ENCODE measurements at regions of chr1 and their contacts with region 1.

Region 1: GRCh38 chr1:198681831-198682759 is 43.3 kb downstream of the PTPRC start:
- DNase-seq: peak; percentile 28 to 96 (median 92)
- ATAC-seq: peak; percentile 89
- H3K4me3 ChIP-seq: peak overlapping the region; percentile 51
- H3K4me3 Mint-ChIP-seq: peak overlapping the region; percentile 74 to 87 (median 77)
- H3K27ac ChIP-seq: peak overlapping the region; percentile 92
- H3K27ac Mint-ChIP-seq: peak overlapping the region; percentile 90 to 99 (median 98)
- H3K4me1 ChIP-seq: peaks cover 88 to 90% of the 10 kb centered on the region in 2 donors
- H3K4me1 Mint-ChIP-seq: peaks cover 53 to 94% (median 81%) of the 10 kb centered on the region in 7 donors
- H3K27me3 ChIP-seq: no peaks in the 10 kb centered on the region
- H3K27me3 Mint-ChIP-seq: peaks cover 0 to 2% (median 0%) of the 10 kb centered on the region in 5 donors

Region 2: GRCh38 chr1:197775282-197776262 is 906.5 kb before region 1 on chr1 and contains the start of gene DENND1B:
- CTCF ChIA-PET with region 1: no interaction called
- POLR2A ChIA-PET with region 1: interaction called, 3 read pairs
- intact Hi-C with region 1: loop called (anchors 5 to 10 kb)
- DNase-seq: peak; percentile 64 to 83 (median 81)
- ATAC-seq: peak; percentile 80
- H3K4me3 ChIP-seq: peak within 1 kb of the TSS; percentile 68
- H3K4me3 Mint-ChIP-seq: peak within 1 kb of the TSS; percentile 87 to 98 (median 92)
- H3K27ac ChIP-seq: peak within 1 kb of the TSS; percentile 74
- H3K27ac Mint-ChIP-seq: peak within 1 kb of the TSS; percentile 90 to 98 (median 97)
- H3K4me1 ChIP-seq: peaks cover 19 to 34% of the 10 kb centered on the region in 2 donors
- H3K4me1 Mint-ChIP-seq: peaks cover 32 to 72% (median 62%) of the 10 kb centered on the region in 7 donors
- H3K27me3 ChIP-seq: no peaks in the 10 kb centered on the region
- H3K27me3 Mint-ChIP-seq: no peaks in the 10 kb centered on the region
- total RNA-seq, gene DENND1B: 14.2 to 28.7 (median 23.2) TPM

Region 3: GRCh38 chr1:198275597-198275996 is 406.5 kb before region 1 on chr1:
- CTCF ChIA-PET with region 1: no interaction called
- POLR2A ChIA-PET with region 1: interaction called, 4 read pairs
- intact Hi-C with region 1: loop called in 1 of 2 experiments (anchors 5 kb)
- DNase-seq: peak in 1 of 9 donors; percentile 14
- ATAC-seq: no peak
- H3K4me3 ChIP-seq: no peak overlapping the region
- H3K4me3 Mint-ChIP-seq: no peak overlapping the region
- H3K27ac ChIP-seq: no peak overlapping the region
- H3K27ac Mint-ChIP-seq: no peak overlapping the region
- H3K4me1 ChIP-seq: no peaks in the 10 kb centered on the region
- H3K4me1 Mint-ChIP-seq: peaks cover 6 to 29% (median 14%) of the 10 kb centered on the region in 7 donors
- H3K27me3 ChIP-seq: no peaks in the 10 kb centered on the region
- H3K27me3 Mint-ChIP-seq: no peaks in the 10 kb centered on the region

Region 4: GRCh38 chr1:198497346-198498102 is 184.6 kb before region 1 on chr1:
- CTCF ChIA-PET with region 1: no interaction called
- POLR2A ChIA-PET with region 1: no interaction called
- intact Hi-C with region 1: no loop called
- DNase-seq: no peak
- ATAC-seq: no peak
- H3K4me3 ChIP-seq: no peak overlapping the region
- H3K4me3 Mint-ChIP-seq: no peak overlapping the region
- H3K27ac ChIP-seq: no peak overlapping the region
- H3K27ac Mint-ChIP-seq: no peak overlapping the region
- H3K4me1 ChIP-seq: no peaks in the 10 kb centered on the region
- H3K4me1 Mint-ChIP-seq: peaks cover 0 to 10% (median 0%) of the 10 kb centered on the region in 7 donors
- H3K27me3 ChIP-seq: no peaks in the 10 kb centered on the region
- H3K27me3 Mint-ChIP-seq: no peaks in the 10 kb centered on the region

Region 5: DNA sequence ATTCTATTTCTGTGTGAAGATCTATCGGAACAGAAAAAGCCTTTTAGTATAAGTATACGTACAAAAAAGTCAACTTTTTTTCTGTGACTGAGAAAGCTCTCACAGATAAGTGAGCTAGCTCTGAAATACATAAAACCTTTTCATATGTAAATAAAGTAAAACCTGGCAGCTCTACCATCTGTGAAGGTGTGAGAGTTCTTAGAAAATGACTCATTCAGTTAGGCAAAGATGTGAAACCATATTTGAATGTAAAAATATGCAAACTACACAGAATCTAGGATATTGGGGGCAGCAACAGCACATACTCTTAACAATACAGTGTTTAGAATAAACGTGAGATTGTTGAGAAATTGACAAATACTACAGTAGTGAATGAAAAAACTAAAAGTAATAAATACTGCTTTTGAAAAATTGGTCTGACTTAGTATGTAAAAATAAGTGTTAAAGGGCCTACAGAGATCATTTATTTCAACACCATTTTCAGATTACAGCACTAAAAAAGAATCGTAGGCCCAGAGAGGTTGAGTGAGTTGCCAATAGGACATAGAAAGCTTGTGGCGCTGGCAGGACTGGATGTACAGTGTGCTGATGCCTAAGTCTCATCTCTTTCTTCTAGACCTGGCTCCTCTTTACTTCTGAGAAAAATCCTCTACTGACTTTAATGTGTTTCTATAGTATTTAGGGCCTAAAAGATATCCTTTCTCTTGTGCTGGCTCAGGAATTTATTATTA is 161.4 kb before region 1 on chr1:
- CTCF ChIA-PET with region 1: interaction called, 15 read pairs
- POLR2A ChIA-PET with region 1: interaction called, 30 read pairs
- intact Hi-C with region 1: loop called (anchors 1 kb)
- DNase-seq: peak in 3 of 9 donors; percentile 11 to 27 (median 18)
- ATAC-seq: peak; percentile 66
- H3K4me3 ChIP-seq: peak overlapping the region; percentile 44
- H3K4me3 Mint-ChIP-seq: peak overlapping the region; percentile 65 to 79 (median 71)
- H3K27ac ChIP-seq: peak overlapping the region; percentile 81
- H3K27ac Mint-ChIP-seq: peak overlapping the region; percentile 48 to 95 (median 93)
- H3K4me1 ChIP-seq: peaks cover 40 to 48% of the 10 kb centered on the region in 2 donors
- H3K4me1 Mint-ChIP-seq: peaks cover 30 to 77% (median 69%) of the 10 kb centered on the region in 7 donors
- H3K27me3 ChIP-seq: no peaks in the 10 kb centered on the region
- H3K27me3 Mint-ChIP-seq: no peaks in the 10 kb centered on the region

Region 6: GRCh38 chr1:198620951-198621824 is 60.9 kb before region 1 on chr1:
- CTCF ChIA-PET with region 1: interaction called, 36 read pairs
- POLR2A ChIA-PET with region 1: interaction called, 133 read pairs
- intact Hi-C with region 1: loop called (anchors 1 kb)
- DNase-seq: peak; percentile 25 to 82 (median 76)
- ATAC-seq: peak; percentile 87
- H3K4me3 ChIP-seq: peak overlapping the region; percentile 48
- H3K4me3 Mint-ChIP-seq: peak overlapping the region; percentile 65 to 91 (median 84)
- H3K27ac ChIP-seq: peak overlapping the region; percentile 67
- H3K27ac Mint-ChIP-seq: peak overlapping the region; percentile 89 to 99 (median 96)
- H3K4me1 ChIP-seq: peaks cover 73 to 93% of the 10 kb centered on the region in 2 donors
- H3K4me1 Mint-ChIP-seq: peaks cover 58 to 98% (median 85%) of the 10 kb centered on the region in 7 donors
- H3K27me3 ChIP-seq: no peaks in the 10 kb centered on the region
- H3K27me3 Mint-ChIP-seq: no peaks in the 10 kb centered on the region

Region 7: DNA sequence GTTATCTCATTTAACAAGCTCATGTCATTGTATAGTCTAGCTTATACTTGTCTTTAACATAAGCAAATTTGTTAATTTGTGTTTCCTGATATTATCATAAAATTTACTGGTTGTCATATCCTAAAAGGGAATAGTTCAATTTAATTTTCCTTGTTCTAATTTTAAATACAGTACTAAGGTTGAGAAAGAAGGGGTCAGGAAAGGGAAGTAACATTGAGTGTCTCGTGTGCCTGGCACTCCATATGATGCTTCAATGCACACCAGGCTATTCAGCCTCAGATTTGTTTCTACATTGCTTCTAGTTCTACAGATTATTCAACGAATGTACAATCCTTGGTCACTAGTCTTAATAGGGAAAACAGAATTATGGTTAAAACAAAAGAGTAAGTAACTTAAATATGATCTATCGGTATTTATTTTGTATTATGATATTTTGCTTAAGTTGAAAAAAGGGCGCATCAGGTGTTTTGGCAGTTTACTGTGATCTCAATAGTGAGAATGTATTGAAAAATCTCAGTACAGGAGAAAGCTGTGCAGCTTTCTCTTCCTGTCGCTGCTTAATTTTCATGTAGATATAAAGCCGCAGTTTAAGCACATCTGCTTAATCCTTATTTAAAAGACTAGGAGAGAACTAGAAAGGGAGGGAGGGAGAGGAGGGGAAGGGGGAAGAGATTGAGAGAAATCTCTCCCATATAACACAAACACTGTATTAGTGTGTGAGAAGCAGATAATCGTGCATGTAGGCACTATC is 30.3 kb before region 1 on chr1:
- CTCF ChIA-PET with region 1: interaction called, 7 read pairs
- POLR2A ChIA-PET with region 1: interaction called, 143 read pairs
- intact Hi-C with region 1: loop called (anchors 1 kb)
- DNase-seq: no peak
- ATAC-seq: peak; percentile 34
- H3K4me3 ChIP-seq: peak overlapping the region; percentile 41
- H3K4me3 Mint-ChIP-seq: peak overlapping the region; percentile 77 to 92 (median 84)
- H3K27ac ChIP-seq: peak overlapping the region; percentile 94
- H3K27ac Mint-ChIP-seq: peak overlapping the region; percentile 83 to 98 (median 98)
- H3K4me1 ChIP-seq: peaks cover 62% of the 10 kb centered on the region in 2 donors
- H3K4me1 Mint-ChIP-seq: peaks cover 47 to 93% (median 73%) of the 10 kb centered on the region in 7 donors
- H3K27me3 ChIP-seq: no peaks in the 10 kb centered on the region
- H3K27me3 Mint-ChIP-seq: no peaks in the 10 kb centered on the region

Region 8: DNA sequence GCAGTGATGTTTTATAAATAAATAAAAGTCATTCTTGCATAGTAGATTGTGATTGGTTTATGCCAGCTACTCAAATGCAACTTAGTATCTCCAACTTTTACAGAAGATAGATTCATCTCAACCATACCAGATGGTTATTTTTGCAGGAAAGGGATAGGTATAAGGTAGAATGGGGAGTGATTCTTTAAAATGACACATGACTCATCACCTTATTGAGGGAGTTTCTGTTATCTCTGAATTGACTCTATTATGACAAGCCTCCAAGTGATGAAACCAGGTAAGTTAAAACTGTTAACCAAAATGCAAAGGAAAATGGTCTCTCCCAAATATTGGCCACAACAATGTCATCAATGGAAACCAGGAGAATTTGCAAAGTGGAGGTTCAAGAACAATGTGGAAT is 11.2 kb after region 1 on chr1:
- CTCF ChIA-PET with region 1: interaction called, 6 read pairs
- POLR2A ChIA-PET with region 1: interaction called, 13 read pairs
- intact Hi-C with region 1: loop called in 1 of 2 experiments (anchors 2 kb)
- DNase-seq: no peak
- ATAC-seq: no peak
- H3K4me3 ChIP-seq: no peak overlapping the region
- H3K4me3 Mint-ChIP-seq: peak overlapping the region; percentile 38 to 73 (median 58)
- H3K27ac ChIP-seq: peak overlapping the region; percentile 18
- H3K27ac Mint-ChIP-seq: peak overlapping the region; percentile 67 to 91 (median 77)
- H3K4me1 ChIP-seq: peaks cover 51 to 61% of the 10 kb centered on the region in 2 donors
- H3K4me1 Mint-ChIP-seq: peaks cover 50 to 94% (median 88%) of the 10 kb centered on the region in 7 donors
- H3K27me3 ChIP-seq: no peaks in the 10 kb centered on the region
- H3K27me3 Mint-ChIP-seq: no peaks in the 10 kb centered on the region

Region 9: GRCh38 chr1:199265336-199265735 is 583.2 kb after region 1 on chr1:
- CTCF ChIA-PET with region 1: no interaction called
- POLR2A ChIA-PET with region 1: no interaction called
- intact Hi-C with region 1: no loop called
- DNase-seq: no peak
- ATAC-seq: no peak
- H3K4me3 ChIP-seq: no peak overlapping the region
- H3K4me3 Mint-ChIP-seq: no peak overlapping the region
- H3K27ac ChIP-seq: no peak overlapping the region
- H3K27ac Mint-ChIP-seq: no peak overlapping the region
- H3K4me1 ChIP-seq: no peaks in the 10 kb centered on the region
- H3K4me1 Mint-ChIP-seq: peaks cover 0 to 2% (median 0%) of the 10 kb centered on the region in 7 donors
- H3K27me3 ChIP-seq: no peaks in the 10 kb centered on the region
- H3K27me3 Mint-ChIP-seq: peaks cover 1 to 9% (median 5%) of the 10 kb centered on the region in 5 donors

Region 10: GRCh38 chr1:199959515-199960110 is 1277.5 kb after region 1 on chr1:
- CTCF ChIA-PET with region 1: no interaction called
- POLR2A ChIA-PET with region 1: no interaction called
- intact Hi-C with region 1: no loop called
- DNase-seq: no peak
- ATAC-seq: no peak
- H3K4me3 ChIP-seq: no peak overlapping the region
- H3K4me3 Mint-ChIP-seq: no peak overlapping the region
- H3K27ac ChIP-seq: no peak overlapping the region
- H3K27ac Mint-ChIP-seq: no peak overlapping the region
- H3K4me1 ChIP-seq: no peaks in the 10 kb centered on the region
- H3K4me1 Mint-ChIP-seq: peaks cover 0 to 2% (median 0%) of the 10 kb centered on the region in 7 donors
- H3K27me3 ChIP-seq: no peaks in the 10 kb centered on the region
- H3K27me3 Mint-ChIP-seq: peaks cover 0 to 20% (median 5%) of the 10 kb centered on the region in 5 donors